Activated CD4-positive, alpha-beta T cell treated with anti-CD3 and anti-CD28 coated beads, Interleukin-2, amount 10 ng/mL, durations not matched to agents 24 days and 14 days (primary cell): ENCODE measurements at regions of chr10 and their contacts with region 1.

Region 1: DNA sequence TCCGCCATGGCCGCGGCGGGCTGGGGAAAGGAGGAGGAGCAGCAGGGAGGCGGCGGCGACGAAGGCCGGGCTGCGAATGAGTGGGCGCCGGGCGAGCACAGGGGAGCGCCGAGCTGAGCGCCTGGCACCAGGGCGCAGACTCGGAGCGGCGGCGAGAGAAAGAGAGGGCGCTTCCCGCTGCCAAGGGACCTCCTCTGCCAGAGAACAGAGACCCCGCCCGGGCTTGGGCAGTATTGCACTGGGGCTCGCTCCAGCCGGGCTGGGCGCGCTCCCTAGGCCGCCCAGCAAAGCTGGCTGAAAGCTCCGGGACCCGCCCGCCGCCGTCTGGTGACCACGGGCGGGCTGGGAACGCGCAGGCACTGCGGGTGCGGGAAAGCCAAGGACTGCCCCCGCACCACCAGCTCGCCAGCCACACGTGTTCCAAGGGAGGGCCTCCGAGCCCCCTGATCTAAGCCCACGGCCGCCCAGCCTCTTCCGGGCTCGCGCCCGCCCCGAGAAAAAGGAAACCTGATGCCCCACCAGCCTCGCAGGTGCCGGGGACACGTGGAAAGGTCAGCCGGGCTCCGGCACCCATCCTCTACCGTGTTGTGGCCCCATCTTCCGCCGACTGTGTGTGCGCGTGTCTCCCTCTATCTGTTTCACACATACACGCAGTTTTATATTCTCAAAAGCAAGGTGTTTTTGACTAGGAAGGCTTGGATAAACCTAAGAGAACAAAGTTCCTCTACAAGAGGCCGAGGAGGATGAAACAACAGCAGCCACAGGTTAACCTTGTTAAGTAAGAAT is at the start of gene CCDC6:
- DNase-seq: peak; percentile 97
- H3K4me3 Mint-ChIP-seq: peak within 1 kb of the TSS; percentile 99
- H3K27ac Mint-ChIP-seq: peak within 1 kb of the TSS; percentile 99
- H3K4me1 Mint-ChIP-seq: peaks cover 51% of the 10 kb centered on the region
- H3K27me3 Mint-ChIP-seq: no peaks in the 10 kb centered on the region
- total RNA-seq, gene CCDC6: 83.2 and 85.1 TPM in 2 replicates

Region 2: GRCh38 chr10:58268870-58269605 is 1637.6 kb before region 1 on chr10 and contains the start of gene CISD1:
- intact Hi-C with region 1: loop called (anchors 2 kb)
- DNase-seq: peak; percentile 99
- H3K4me3 Mint-ChIP-seq: peak within 1 kb of the TSS; percentile 100
- H3K27ac Mint-ChIP-seq: peak within 1 kb of the TSS; percentile 98
- H3K4me1 Mint-ChIP-seq: peaks cover 31% of the 10 kb centered on the region
- H3K27me3 Mint-ChIP-seq: peaks cover 2% of the 10 kb centered on the region
- total RNA-seq, gene CISD1: 62.6 and 64.2 TPM in 2 replicates

Region 3: GRCh38 chr10:59709395-59710125 is 197.1 kb before region 1 on chr10 and contains the start of gene SLC16A9:
- intact Hi-C with region 1: loop called (anchors 1 kb)
- DNase-seq: peak; percentile 90
- H3K4me3 Mint-ChIP-seq: peak within 1 kb of the TSS; percentile 84
- H3K27ac Mint-ChIP-seq: peak within 1 kb of the TSS; percentile 83
- H3K4me1 Mint-ChIP-seq: peaks cover 6% of the 10 kb centered on the region
- H3K27me3 Mint-ChIP-seq: peaks cover 59% of the 10 kb centered on the region
- total RNA-seq, gene SLC16A9: 4.4 and 4.5 TPM in 2 replicates

Region 4: GRCh38 chr10:59865101-59865500 is 41.5 kb before region 1 on chr10:
- intact Hi-C with region 1: loop called (anchors 1 kb)
- DNase-seq: peak; percentile 72
- H3K4me3 Mint-ChIP-seq: no peak overlapping the region
- H3K27ac Mint-ChIP-seq: peak overlapping the region; percentile 27
- H3K4me1 Mint-ChIP-seq: peaks cover 40% of the 10 kb centered on the region
- H3K27me3 Mint-ChIP-seq: no peaks in the 10 kb centered on the region

Region 5: DNA sequence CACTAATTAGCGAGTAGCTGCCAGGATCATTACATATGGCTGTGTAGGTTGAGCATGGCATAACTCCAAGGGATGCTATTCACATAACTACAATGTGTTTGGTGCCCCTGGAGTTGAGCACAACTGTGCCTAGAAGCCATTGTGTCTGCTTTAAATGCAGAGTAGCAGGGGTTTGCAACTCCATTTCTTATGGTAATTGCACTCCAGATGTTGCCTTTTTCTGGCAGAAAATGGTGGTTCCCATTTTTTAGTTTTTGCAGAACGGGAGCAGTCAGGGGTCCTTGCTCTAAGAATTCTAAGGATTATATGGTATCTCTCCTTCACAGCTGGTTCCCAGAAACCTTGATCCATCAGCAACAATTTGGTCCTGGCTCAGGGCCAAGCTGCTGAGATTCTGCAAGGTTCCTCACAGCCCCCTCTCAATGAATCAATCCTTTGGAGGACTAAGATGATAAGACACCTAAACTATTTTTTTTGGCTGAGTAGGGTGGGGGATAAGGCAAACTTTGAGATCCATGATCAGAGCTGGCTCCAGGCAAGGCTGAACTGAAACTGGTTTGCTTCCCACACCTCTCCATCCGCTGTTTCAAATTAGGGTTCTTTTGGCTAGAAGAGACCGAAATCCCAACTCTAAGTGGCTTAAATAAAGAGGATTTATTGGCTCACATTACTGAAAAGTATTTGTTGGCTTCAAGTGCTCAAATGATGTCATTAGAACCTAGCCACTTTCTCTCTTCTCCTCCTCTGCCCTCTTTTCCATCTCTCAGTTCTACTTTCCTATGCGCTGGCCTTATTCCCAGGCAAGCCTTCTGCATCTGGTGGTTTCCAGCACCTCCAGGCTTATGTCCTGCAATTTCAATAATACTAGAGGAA is 97.3 kb after region 1 on chr10:
- intact Hi-C with region 1: loop called (anchors 5 kb)
- DNase-seq: no peak
- H3K4me3 Mint-ChIP-seq: no peak overlapping the region
- H3K27ac Mint-ChIP-seq: no peak overlapping the region
- H3K4me1 Mint-ChIP-seq: peaks cover 16% of the 10 kb centered on the region
- H3K27me3 Mint-ChIP-seq: no peaks in the 10 kb centered on the region

Region 6: DNA sequence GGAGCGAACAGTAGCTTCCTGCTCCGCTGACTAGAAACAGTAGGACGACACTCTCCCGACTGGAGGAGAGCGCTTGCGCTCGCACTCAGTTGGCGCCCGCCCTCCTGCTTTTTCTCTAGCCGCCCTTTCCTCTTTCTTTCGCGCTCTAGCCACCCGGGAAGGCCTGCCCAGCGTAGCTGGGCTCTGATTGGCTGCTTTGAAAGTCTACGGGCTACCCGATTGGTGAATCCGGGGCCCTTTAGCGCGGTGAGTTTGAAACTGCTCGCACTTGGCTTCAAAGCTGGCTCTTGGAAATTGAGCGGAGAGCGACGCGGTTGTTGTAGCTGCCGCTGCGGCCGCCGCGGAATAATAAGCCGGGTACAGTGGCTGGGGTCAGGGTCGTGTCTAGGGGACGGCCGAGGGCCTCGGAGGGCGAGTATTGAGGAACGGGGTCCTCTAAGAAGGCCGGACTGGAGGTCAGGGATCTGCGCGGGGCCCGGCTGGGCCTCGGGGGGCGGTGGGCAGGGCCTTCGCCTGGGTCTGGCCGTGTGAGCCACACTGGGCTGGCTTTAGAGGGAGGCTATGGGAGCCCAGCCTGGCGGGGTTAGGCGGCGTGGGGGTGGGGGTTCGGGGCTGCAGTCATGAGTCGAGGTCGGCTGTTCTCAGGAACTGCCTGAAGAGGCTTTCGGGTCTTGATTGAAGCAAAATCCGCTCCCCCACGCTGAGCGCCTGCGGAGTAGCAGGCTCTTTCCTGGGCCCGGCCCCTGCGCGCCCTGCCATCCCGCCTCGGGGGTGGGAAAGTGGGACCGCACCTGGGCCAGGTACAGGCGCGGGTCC is 871.8 kb after region 1 on chr10 and contains the start of gene CDK1:
- intact Hi-C with region 1: loop called (anchors 5 kb)
- DNase-seq: peak; percentile 99
- H3K4me3 Mint-ChIP-seq: peak within 1 kb of the TSS; percentile 99
- H3K27ac Mint-ChIP-seq: peak within 1 kb of the TSS; percentile 99
- H3K4me1 Mint-ChIP-seq: peaks cover 32% of the 10 kb centered on the region
- H3K27me3 Mint-ChIP-seq: peaks cover 2% of the 10 kb centered on the region
- total RNA-seq, gene CDK1: 101 and 105 TPM in 2 replicates